Endothelial cell of umbilical vein (primary cell): ENCODE measurements at regions of chr3 and their contacts with region 1.

Region 1: GRCh38 chr3:73502609-73503583 is 121.8 kb downstream of the PDZRN3 start:
- DNase-seq: peak; percentile 57
- H3K4me3 ChIP-seq: no peak overlapping the region
- H3K27ac ChIP-seq: no peak overlapping the region
- H3K4me1 ChIP-seq: no peaks in the 10 kb centered on the region
- H3K27me3 ChIP-seq: no peaks in the 10 kb centered on the region
- CTCF ChIP-seq: peak; percentile 64 to 65
- POLR2A ChIP-seq: no peak

Region 2: DNA sequence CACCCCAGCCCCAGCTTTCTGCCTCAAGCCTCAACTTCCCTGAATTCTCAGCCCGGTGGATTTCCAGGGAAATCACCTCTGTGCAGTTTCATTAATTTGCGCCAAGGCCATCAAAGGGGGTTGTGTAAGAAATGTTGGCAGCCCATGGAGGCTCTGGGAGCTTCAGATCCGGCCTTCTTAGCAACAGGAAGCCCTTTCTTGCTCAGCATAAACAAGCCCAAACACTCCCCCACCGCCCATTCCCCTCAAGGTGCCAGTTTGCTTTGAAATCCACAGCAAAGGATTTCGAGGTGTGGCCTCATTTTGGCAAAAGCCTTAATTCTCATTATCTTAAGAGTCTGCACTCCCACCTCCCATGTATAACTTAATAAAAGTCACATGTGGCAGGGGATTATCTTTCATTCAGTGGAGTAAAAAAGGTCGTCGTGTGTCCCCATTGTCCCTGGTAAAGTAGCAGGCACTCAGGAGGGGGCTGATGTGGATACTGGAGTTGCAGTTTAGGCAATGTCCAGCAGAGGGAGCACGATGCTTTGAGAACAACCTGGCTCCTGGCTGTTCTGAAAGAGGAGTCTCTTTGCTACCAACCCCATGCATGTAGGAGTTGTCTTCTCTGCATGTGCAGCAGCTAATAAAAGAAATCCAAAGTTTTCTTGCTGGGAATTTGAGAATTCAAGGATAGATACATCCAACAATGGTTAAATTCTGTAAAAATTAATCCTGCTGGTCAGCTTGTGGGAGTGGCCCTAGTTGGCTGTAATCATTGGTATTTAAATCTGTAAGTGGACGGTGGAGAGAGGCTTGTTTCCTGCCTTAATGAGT is 401.9 kb before region 1 on chr3:
- CTCF ChIA-PET with region 1: interaction called, 43 read pairs
- POLR2A ChIA-PET with region 1: no interaction called
- dilution Hi-C with region 1: no loop called
- intact Hi-C with region 1: loop called (anchors 1 kb)
- DNase-seq: peak; percentile 70
- H3K4me3 ChIP-seq: no peak overlapping the region
- H3K27ac ChIP-seq: no peak overlapping the region
- H3K4me1 ChIP-seq: no peaks in the 10 kb centered on the region
- H3K27me3 ChIP-seq: no peaks in the 10 kb centered on the region
- CTCF ChIP-seq: peak; percentile 79 to 86
- POLR2A ChIP-seq: no peak

Region 3: DNA sequence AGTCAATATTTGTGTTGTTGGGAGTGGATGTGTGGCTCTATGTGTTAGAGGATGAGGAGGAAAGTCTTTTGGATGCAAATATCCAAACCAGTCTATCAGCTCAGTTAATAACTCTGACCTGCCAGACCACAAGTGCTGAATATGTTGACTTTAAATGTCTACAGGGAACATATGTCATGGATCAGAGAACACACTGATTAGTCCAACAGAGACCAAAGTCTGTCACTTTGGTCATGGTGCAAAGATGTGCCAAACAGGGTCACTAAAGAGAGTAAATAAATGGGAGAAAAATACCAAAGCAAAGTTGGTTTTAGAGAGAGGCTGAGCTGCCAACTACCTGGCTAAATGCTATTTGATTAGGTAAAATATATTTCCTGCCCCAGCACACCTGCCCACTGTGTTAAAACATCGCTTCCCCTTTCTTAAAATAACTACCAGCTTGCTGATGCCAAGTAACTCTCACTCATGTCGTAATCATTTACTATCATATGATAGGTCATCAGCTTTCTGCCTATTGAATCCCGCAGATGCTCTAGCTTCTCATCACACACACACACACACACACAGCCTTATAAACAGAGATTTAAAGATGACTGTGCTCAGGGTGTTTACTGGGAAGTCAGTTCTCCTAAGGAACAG is 51.5 kb before region 1 on chr3:
- CTCF ChIA-PET with region 1: interaction called, 3 read pairs
- POLR2A ChIA-PET with region 1: no interaction called
- dilution Hi-C with region 1: no loop called
- intact Hi-C with region 1: loop called (anchors 1 kb)
- DNase-seq: no peak
- H3K4me3 ChIP-seq: no peak overlapping the region
- H3K27ac ChIP-seq: no peak overlapping the region
- H3K4me1 ChIP-seq: no peaks in the 10 kb centered on the region
- H3K27me3 ChIP-seq: no peaks in the 10 kb centered on the region
- CTCF ChIP-seq: no peak
- POLR2A ChIP-seq: no peak